CD8-positive, alpha-beta T cell (primary cell): ENCODE measurements at regions of chr5 and their contacts with region 1.

Region 1: DNA sequence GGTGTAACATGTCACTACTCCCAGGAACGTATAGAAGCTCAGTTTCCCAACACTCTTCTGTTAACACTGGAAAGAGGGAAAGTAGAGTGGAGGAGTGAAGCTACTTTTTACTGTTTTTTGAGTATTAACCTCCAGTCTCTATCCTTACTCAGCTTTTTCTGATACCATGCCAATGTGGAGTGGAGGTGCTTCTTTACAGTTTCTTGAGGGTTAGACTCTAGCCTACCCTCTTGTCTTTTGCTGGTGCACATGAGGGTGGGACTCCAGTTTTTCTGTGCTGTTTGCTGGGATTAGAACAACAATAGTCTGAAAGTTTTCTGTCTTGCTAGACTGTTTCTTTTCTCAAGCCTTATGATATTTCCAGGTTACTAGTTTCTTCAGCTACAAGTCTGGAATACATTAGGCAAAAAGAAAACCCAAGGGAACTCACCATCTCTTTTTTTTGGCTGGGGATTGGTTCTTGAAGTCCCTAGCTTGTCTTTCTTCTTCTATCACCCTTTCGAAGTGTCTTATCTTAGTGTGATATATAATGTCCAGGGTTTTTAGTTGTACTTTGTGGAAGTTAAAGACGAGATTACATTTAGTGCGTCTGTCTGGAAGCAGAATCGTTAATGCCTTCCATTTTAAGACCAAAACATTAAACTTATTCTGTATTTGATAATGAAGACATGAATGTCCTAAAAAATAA is 35.9 kb downstream of the PRR16 start:
- DNase-seq: no peak
- ATAC-seq: no peak
- H3K4me3 ChIP-seq: no peak overlapping the region
- H3K4me3 Mint-ChIP-seq: no peak overlapping the region
- H3K27ac ChIP-seq: no peak overlapping the region
- H3K27ac Mint-ChIP-seq: no peak overlapping the region
- H3K4me1 ChIP-seq: no peaks in the 10 kb centered on the region
- H3K4me1 Mint-ChIP-seq: no peaks in the 10 kb centered on the region
- H3K27me3 ChIP-seq: no peaks in the 10 kb centered on the region
- H3K27me3 Mint-ChIP-seq: no peaks in the 10 kb centered on the region
- CTCF ChIP-seq: no peak

Region 2: DNA sequence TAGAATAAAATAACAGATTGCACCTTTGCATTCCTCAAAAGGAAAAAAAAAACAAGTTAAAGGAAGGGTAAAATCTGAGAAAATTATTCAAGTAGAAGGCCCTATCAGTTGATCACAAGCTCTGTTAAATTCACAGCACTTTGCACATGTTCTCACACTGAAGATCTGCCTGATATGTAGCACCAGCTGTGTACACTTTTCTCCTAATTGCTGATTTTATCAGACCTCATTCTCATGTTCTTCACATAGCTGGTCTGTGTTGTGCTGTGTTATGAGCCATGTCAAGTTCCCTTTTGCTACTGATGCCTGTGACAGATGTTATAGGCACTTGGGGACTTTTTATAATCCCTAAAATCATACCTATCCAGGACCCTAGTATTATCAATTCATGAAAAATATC is 426.3 kb before region 1 on chr5:
- CTCF ChIA-PET with region 1: no interaction called
- POLR2A ChIA-PET with region 1: no interaction called
- intact Hi-C with region 1: loop called in 1 of 2 experiments (anchors 10 kb)
- DNase-seq: no peak
- ATAC-seq: no peak
- H3K4me3 ChIP-seq: no peak overlapping the region
- H3K4me3 Mint-ChIP-seq: no peak overlapping the region
- H3K27ac ChIP-seq: no peak overlapping the region
- H3K27ac Mint-ChIP-seq: no peak overlapping the region
- H3K4me1 ChIP-seq: no peaks in the 10 kb centered on the region
- H3K4me1 Mint-ChIP-seq: no peaks in the 10 kb centered on the region
- H3K27me3 ChIP-seq: no peaks in the 10 kb centered on the region
- H3K27me3 Mint-ChIP-seq: no peaks in the 10 kb centered on the region
- CTCF ChIP-seq: no peak

Region 3: DNA sequence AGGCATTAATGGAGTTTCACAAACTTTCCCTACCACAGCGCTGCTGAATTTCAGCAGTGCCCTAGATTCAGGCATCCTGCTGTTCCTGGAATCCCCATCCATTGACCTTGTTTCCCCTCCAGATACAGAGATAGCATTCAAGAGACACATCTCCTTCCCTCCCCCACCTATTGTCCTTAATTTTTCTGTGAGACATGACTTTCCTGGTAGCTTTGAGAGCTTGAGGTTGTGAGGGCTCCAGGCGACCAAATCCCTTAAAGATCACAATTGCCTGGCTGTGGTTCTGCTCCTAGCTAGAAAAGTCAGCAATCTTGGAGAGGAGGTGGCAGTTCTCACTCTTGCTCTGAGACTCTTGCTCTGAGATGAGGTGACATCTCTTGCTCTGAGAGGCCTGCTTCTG is 12.0 kb after region 1 on chr5:
- CTCF ChIA-PET with region 1: no interaction called
- POLR2A ChIA-PET with region 1: no interaction called
- intact Hi-C with region 1: no loop called
- DNase-seq: no peak
- ATAC-seq: no peak
- H3K4me3 ChIP-seq: no peak overlapping the region
- H3K4me3 Mint-ChIP-seq: no peak overlapping the region
- H3K27ac ChIP-seq: no peak overlapping the region
- H3K27ac Mint-ChIP-seq: no peak overlapping the region
- H3K4me1 ChIP-seq: no peaks in the 10 kb centered on the region
- H3K4me1 Mint-ChIP-seq: no peaks in the 10 kb centered on the region
- H3K27me3 ChIP-seq: no peaks in the 10 kb centered on the region
- H3K27me3 Mint-ChIP-seq: no peaks in the 10 kb centered on the region
- CTCF ChIP-seq: no peak